ENCODE measurements at regions of chr6 and their contacts with region 1.

Region 1: DNA sequence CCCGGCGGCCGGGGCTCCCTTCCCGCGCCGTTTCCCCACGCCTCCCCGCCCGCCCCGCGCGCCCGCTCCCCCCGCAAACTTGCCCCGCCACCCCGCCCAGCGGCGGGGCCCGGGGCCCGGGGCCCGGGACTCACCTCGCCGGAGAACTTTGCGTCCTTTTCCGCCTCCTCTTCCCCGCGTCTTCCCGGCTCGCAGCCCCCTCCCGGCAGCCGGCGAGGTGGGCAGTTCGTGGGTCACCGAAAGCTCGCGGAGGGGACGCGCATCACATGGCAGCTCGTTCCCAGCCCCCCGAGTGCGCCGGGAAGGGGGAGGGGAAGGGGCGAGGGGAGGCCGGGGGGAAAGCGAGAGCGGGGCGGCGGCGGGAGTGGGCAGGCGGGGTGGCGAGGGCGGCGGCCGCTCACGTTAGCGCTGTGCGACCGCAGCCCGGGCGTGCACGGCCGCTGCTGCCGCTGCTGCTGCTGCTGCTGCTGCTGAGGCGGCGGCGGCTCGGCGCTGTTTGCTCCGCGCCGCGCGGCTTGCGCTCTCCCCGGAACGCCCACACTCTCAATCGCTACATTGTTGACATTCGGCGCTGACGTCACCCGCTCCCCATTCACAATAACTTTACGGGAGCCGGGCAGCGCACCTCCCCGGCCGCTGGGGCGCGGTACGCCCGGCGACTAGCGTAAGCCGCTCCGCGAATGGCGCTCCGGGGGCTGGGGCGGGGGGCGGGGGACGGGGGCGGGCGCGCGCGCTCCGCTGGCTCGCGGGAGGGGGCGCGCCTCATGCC is at the start of gene BACH2:
- DNase-seq: peak; percentile 91 to 95 (median 92)
- ATAC-seq: peak; percentile 88
- H3K4me3 ChIP-seq: peak within 1 kb of the TSS; percentile 49 to 58
- H3K27ac ChIP-seq: peak within 1 kb of the TSS; percentile 54 to 84
- H3K4me1 ChIP-seq: peaks cover 6 to 19% of the 10 kb centered on the region in 2 donors
- H3K27me3 ChIP-seq: peaks cover 23 to 79% of the 10 kb centered on the region in 2 donors
- CTCF ChIP-seq: peak; percentile 21 to 24
- polyA plus RNA-seq, gene BACH2: 7.3 to 10.6 (median 9.4) TPM

Region 2: DNA sequence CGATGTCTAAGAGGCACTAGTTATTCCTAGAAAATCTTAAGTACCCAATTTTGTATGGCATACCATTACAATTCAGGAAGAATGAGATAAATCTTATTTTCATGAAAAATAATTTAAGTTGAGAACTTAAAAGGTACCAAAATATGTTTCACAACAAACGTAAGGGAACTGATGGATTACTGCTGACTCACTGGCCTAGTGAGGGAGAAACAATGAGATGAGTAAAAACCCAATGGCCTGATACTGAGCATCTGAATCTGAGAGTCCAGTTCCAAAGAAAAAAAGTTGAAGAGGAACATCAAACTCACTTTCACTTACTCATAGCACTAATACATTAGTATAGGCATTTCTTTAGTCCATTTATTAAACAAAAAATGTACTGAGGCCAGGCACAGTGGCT is 533.0 kb before region 1 on chr6:
- intact Hi-C with region 1: no loop called
- DNase-seq: no peak
- ATAC-seq: no peak
- H3K4me3 ChIP-seq: no peak overlapping the region
- H3K27ac ChIP-seq: no peak overlapping the region
- H3K4me1 ChIP-seq: no peaks in the 10 kb centered on the region
- H3K27me3 ChIP-seq: no peaks in the 10 kb centered on the region
- CTCF ChIP-seq: no peak

Region 3: GRCh38 chr6:89970609-89971337 is 325.8 kb before region 1 on chr6:
- intact Hi-C with region 1: loop called in 1 of 2 experiments (anchors 10 kb)
- DNase-seq: peak in 2 of 4 donors; percentile 34 to 70
- ATAC-seq: peak; percentile 89
- H3K4me3 ChIP-seq: no peak overlapping the region
- H3K27ac ChIP-seq: no peak overlapping the region
- H3K4me1 ChIP-seq: peaks cover 0 to 3% of the 10 kb centered on the region in 2 donors
- H3K27me3 ChIP-seq: no peaks in the 10 kb centered on the region
- CTCF ChIP-seq: peak; percentile 34 to 48

Region 4: GRCh38 chr6:90393232-90393884 is 96.8 kb after region 1 on chr6:
- intact Hi-C with region 1: loop called in 1 of 2 experiments (anchors 10 kb)
- DNase-seq: peak in 2 of 4 donors; percentile 70 to 78
- ATAC-seq: peak; percentile 94
- H3K4me3 ChIP-seq: no peak overlapping the region
- H3K27ac ChIP-seq: no peak overlapping the region
- H3K4me1 ChIP-seq: peaks cover 0 to 6% of the 10 kb centered on the region in 2 donors
- H3K27me3 ChIP-seq: no peaks in the 10 kb centered on the region
- CTCF ChIP-seq: peak; percentile 61 to 72

Region 5: GRCh38 chr6:90523779-90524310 is 227.3 kb after region 1 on chr6:
- intact Hi-C with region 1: no loop called
- DNase-seq: no peak
- ATAC-seq: no peak
- H3K4me3 ChIP-seq: no peak overlapping the region
- H3K27ac ChIP-seq: no peak overlapping the region
- H3K4me1 ChIP-seq: no peaks in the 10 kb centered on the region
- H3K27me3 ChIP-seq: no peaks in the 10 kb centered on the region
- CTCF ChIP-seq: no peak

Region 6: DNA sequence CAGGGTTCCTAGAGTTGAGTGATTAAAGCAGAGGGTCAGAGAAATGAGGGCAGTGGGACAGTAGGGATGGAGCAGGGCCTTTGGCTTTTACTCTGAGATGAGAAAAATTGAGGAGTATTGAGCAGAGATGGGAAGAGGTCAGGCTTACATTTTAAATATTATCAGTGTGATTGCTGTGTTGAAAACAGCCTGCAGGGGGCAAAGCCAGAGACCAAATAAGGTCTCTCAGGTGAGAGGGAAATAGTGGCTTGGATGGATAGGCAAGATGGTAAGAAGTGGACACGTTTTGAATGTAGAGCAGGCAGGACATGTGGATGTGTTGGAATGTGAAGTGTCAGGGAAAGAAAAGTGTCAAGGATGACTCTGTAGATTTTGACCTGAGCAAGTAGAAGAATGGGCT is 395.3 kb after region 1 on chr6:
- intact Hi-C with region 1: no loop called
- DNase-seq: no peak
- ATAC-seq: no peak
- H3K4me3 ChIP-seq: no peak overlapping the region
- H3K27ac ChIP-seq: no peak overlapping the region
- H3K4me1 ChIP-seq: no peaks in the 10 kb centered on the region
- H3K27me3 ChIP-seq: no peaks in the 10 kb centered on the region
- CTCF ChIP-seq: no peak